A673 (cell line): ENCODE measurements at regions of chr15 and their contacts with region 1.

Region 1: GRCh38 chr15:90025489-90026033 is 24.4 kb downstream of the ZNF710 start:
- DNase-seq: no peak
- H3K4me3 ChIP-seq: no peak overlapping the region
- H3K27ac ChIP-seq: no peak overlapping the region
- H3K4me1 ChIP-seq: peaks cover under 1% of the 10 kb centered on the region
- H3K27me3 ChIP-seq: no peaks in the 10 kb centered on the region
- CTCF ChIP-seq: no peak

Region 2: DNA sequence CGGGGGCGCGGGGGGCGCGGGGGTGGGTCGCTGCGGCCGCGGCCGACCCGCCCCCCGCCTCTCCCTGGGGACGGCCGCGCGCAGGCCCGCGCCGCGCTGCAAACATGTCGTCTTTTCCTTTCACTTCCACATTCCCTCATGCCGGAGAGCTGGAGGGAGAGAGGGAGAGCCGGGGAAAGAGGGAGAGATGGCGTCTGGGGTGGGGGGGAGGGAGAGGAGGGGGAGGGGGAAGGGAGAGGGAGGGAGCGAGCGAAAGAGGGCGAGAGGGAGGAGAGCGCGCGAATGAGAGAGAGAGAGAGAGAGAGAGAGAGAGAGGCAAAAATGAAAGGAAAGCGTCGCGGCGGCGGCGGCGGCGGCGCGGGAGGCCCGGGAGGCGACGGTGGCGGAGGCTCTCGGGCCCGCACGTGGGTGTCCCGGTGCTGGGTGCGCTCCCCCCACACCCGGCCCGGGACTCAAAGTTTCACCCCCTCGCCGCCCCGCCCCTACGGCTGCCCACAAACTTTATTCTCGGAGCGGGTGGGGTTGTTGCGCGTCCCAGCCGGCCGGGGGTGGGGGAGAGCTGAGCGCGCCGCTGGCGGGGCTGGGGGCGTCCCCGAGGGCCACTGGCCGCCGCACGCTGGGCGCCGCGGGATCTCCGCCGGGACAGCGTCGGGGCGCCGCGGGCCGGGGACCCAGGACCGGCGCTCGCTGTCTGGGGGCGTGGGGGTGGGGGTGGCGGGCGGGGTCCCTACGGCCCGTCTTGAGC is 23.7 kb before region 1 on chr15:
- CTCF ChIA-PET with region 1: interaction called, 10 read pairs
- POLR2A ChIA-PET with region 1: no interaction called
- intact Hi-C with region 1: no loop called
- DNase-seq: peak; percentile 75
- H3K4me3 ChIP-seq: peak overlapping the region; percentile 81
- H3K27ac ChIP-seq: peak overlapping the region; percentile 87
- H3K4me1 ChIP-seq: peaks cover 19% of the 10 kb centered on the region
- H3K27me3 ChIP-seq: no peaks in the 10 kb centered on the region
- CTCF ChIP-seq: no peak

Region 3: DNA sequence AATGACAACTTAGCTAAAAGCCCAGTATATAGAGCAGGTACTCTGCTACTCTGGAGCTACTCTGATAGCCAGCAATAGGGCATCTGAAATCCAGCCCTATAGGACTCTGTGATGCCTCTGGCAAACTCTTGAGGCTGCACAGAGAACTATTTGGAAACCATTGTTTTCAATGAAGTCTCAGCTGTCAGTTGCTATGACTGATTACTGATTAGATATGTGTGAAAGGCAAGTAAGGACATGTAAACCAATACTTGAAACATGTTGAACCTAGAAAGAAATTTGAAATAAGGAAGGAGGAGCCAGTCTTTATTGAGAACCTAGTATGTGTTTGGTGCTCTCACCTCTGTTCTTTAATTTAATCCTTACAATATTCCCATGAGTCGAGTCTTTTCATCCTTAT is 464.0 kb after region 1 on chr15:
- CTCF ChIA-PET with region 1: no interaction called
- POLR2A ChIA-PET with region 1: no interaction called
- intact Hi-C with region 1: no loop called
- DNase-seq: no peak
- H3K4me3 ChIP-seq: no peak overlapping the region
- H3K27ac ChIP-seq: no peak overlapping the region
- H3K4me1 ChIP-seq: no peaks in the 10 kb centered on the region
- H3K27me3 ChIP-seq: no peaks in the 10 kb centered on the region
- CTCF ChIP-seq: no peak